A549 (cell line): ENCODE measurements at regions of chr15 and their contacts with region 1.

Region 1: GRCh38 chr15:88904624-88905327 is 8.4 kb downstream of the MFGE8 start:
- DNase-seq: peak; percentile 82 to 89
- ATAC-seq: peak; percentile 64 to 88
- H3K4me3 ChIP-seq: no peak overlapping the region
- H3K27ac ChIP-seq: peak overlapping the region; percentile 49 to 71
- H3K4me1 ChIP-seq: peaks cover 33% of the 10 kb centered on the region
- CTCF ChIP-seq: peak; percentile 99
- EP300 ChIP-seq: no peak
- POLR2A ChIP-seq: no peak
- RAD21 ChIP-seq: peak; percentile 97

Region 2: GRCh38 chr15:88727439-88727838 is 177.3 kb before region 1 on chr15:
- CTCF ChIA-PET with region 1: no interaction called
- POLR2A ChIA-PET with region 1: no interaction called
- DNase-seq: no peak
- ATAC-seq: peak; percentile 53 to 62; a peak in 5 of 6 replicates
- H3K4me3 ChIP-seq: no peak overlapping the region
- H3K27ac ChIP-seq: no peak overlapping the region
- H3K4me1 ChIP-seq: no peaks in the 10 kb centered on the region
- CTCF ChIP-seq: no peak
- EP300 ChIP-seq: no peak
- POLR2A ChIP-seq: no peak
- RAD21 ChIP-seq: no peak

Region 3: DNA sequence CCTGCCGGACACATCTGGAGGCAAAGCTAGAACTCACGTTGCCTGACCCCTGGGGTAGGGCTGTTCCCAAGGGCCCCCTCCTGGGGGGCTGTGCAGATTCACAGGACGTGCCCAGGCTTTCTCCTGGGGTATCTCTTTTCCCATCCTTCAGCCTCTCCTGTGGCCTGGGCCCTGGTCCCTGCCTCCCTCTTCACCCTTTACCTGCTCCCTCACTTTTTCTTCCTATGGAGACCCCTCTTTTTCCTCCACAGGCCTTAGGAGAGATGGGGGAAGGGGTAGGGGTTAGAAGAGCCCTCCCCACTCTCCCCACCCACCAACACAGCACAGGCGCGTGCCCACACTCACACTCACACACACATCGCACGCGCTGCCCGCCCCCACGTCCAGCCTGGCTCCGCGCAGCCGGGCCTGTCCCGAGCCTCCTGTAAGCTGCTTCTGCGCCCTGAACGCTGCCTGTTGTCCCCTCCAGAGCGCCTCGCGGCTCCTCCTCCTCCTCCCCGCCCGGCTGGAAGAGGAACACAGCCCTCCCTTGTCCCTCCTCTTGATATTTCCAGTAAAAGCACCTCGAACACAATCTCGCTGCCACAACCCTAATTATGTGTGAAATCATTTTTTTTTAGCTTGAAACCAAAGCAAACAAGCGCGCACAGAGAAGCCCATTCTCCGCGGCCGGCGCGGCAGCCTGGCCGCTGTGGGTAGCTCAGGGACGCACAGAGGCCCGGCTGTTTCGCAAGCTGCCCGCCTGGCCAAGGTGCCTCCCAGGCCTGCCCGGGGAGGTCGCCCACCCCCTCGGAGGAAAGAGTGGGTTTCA is 135.4 kb before region 1 on chr15:
- CTCF ChIA-PET with region 1: no interaction called
- POLR2A ChIA-PET with region 1: no interaction called
- DNase-seq: no peak
- ATAC-seq: peak; percentile 41 to 61; a peak in 4 of 6 replicates
- H3K4me3 ChIP-seq: no peak overlapping the region
- H3K27ac ChIP-seq: no peak overlapping the region
- H3K4me1 ChIP-seq: no peaks in the 10 kb centered on the region
- CTCF ChIP-seq: no peak
- EP300 ChIP-seq: no peak
- POLR2A ChIP-seq: no peak
- RAD21 ChIP-seq: no peak

Region 4: DNA sequence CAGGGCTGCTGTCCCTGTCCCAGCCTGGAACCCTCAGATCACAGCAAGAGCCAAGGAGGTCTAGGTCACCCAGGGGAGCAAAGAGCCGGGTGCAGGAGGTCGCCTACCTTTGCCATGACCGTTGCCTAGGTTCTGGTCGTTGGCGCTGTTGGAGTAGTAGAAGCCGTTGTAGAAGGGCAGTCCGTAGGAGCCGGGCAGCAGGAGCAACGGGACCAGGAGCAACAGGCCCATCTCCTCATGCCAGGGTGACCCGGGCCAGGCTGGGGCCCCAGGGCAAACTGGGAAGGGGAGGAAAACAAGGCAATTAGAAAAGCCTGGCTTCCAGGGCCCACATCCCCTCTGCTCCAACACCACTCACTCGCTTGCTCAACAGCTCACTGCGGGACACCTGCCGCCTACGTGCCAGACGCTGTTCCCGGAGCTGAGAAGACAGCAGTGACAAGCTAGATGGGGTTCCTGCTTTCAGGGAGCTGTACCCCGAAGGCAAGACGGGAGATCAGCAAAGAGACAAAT is 17.7 kb before region 1 on chr15:
- CTCF ChIA-PET with region 1: interaction called, 212 read pairs
- POLR2A ChIA-PET with region 1: no interaction called
- DNase-seq: no peak
- ATAC-seq: no peak
- H3K4me3 ChIP-seq: no peak overlapping the region
- H3K27ac ChIP-seq: no peak overlapping the region
- H3K4me1 ChIP-seq: no peaks in the 10 kb centered on the region
- CTCF ChIP-seq: no peak
- EP300 ChIP-seq: no peak
- POLR2A ChIP-seq: no peak
- RAD21 ChIP-seq: no peak

Region 5: GRCh38 chr15:88954431-88955277 is 49.9 kb after region 1 on chr15:
- CTCF ChIA-PET with region 1: interaction called, 28 read pairs
- POLR2A ChIA-PET with region 1: no interaction called
- DNase-seq: no peak
- ATAC-seq: peak; percentile 24 to 27; a peak in 2 of 6 replicates
- H3K4me3 ChIP-seq: no peak overlapping the region
- H3K27ac ChIP-seq: peak overlapping the region in 1 of 2 experiments; percentile 34; a peak in 2 of 6 replicates
- H3K4me1 ChIP-seq: peaks cover 10% of the 10 kb centered on the region; the same call in 1 of the 3 replicates
- CTCF ChIP-seq: no peak
- EP300 ChIP-seq: no peak
- POLR2A ChIP-seq: no peak
- RAD21 ChIP-seq: no peak

Region 6: DNA sequence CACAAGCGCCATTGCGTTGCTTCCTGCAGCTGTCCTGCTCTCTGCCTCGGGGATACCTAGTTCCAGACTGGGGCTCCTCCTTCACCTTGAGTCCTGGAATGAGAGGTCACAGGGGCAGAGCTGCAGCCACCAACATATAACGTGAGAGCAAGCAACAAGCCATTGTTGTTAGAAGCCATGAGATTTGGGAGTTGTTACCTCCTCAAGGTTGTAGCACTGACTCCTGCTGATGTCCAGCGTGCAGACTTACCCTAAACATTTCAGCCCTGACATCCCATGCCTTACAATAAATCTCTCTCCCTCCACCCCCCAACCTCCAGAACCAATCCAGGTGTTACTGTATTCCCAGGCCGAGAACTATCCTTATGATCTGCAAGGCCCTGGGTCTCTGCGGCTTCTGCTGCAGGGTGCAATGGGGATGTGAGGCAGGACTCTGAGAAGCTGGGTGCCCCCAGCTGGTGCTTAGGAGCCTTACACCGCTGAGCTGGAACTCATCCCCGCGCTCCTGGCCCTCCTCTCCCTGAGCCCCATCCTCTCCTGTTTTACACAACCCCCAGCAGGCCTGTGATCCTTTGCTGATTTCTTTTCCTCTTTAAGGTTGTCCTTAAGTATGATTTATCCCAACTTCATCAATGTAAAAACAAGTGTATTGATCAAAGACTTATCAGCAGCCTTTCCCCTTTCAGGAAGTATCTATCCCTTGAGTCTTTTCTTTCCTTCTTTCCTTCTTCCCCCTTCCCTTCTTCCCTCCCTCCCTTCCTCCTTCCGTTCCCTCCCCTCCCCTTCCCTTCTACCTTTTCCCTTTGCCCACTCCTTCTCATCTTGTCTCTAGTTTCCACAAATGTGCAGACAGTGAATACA is 99.3 kb after region 1 on chr15:
- CTCF ChIA-PET with region 1: interaction called, 851 read pairs
- POLR2A ChIA-PET with region 1: interaction called, 16 read pairs
- DNase-seq: peak; percentile 78 to 79
- ATAC-seq: peak; percentile 96
- H3K4me3 ChIP-seq: no peak overlapping the region
- H3K27ac ChIP-seq: peak overlapping the region; percentile 24 to 87; a peak in 5 of 6 replicates
- H3K4me1 ChIP-seq: peaks cover 27% of the 10 kb centered on the region
- CTCF ChIP-seq: peak; percentile 62
- EP300 ChIP-seq: no peak
- POLR2A ChIP-seq: no peak
- RAD21 ChIP-seq: peak; percentile 82 to 84

Region 7: GRCh38 chr15:89052474-89052873 is 147.7 kb after region 1 on chr15:
- CTCF ChIA-PET with region 1: interaction called, 40 read pairs
- POLR2A ChIA-PET with region 1: no interaction called
- DNase-seq: no peak
- ATAC-seq: peak in 1 of 2 experiments; percentile 24; a peak in 2 of 6 replicates
- H3K4me3 ChIP-seq: no peak overlapping the region
- H3K27ac ChIP-seq: no peak overlapping the region
- H3K4me1 ChIP-seq: peaks cover 2% of the 10 kb centered on the region; the same call in 1 of the 3 replicates
- CTCF ChIP-seq: no peak
- EP300 ChIP-seq: no peak
- POLR2A ChIP-seq: no peak
- RAD21 ChIP-seq: no peak

Region 8: GRCh38 chr15:89197503-89197971 is 292.8 kb after region 1 on chr15:
- CTCF ChIA-PET with region 1: interaction called, 10 read pairs
- POLR2A ChIA-PET with region 1: no interaction called
- DNase-seq: no peak
- ATAC-seq: no peak
- H3K4me3 ChIP-seq: no peak overlapping the region
- H3K27ac ChIP-seq: no peak overlapping the region
- H3K4me1 ChIP-seq: no peaks in the 10 kb centered on the region
- CTCF ChIP-seq: no peak
- EP300 ChIP-seq: no peak
- POLR2A ChIP-seq: no peak
- RAD21 ChIP-seq: no peak